GM13976 (cell line): ENCODE measurements at regions of chr11 and their contacts with region 1.

Region 1: GRCh38 chr11:66659763-66660162 is 17.9 kb downstream of the RBM4B start:
- DNase-seq: no peak
- CTCF ChIP-seq: no peak

Region 2: DNA sequence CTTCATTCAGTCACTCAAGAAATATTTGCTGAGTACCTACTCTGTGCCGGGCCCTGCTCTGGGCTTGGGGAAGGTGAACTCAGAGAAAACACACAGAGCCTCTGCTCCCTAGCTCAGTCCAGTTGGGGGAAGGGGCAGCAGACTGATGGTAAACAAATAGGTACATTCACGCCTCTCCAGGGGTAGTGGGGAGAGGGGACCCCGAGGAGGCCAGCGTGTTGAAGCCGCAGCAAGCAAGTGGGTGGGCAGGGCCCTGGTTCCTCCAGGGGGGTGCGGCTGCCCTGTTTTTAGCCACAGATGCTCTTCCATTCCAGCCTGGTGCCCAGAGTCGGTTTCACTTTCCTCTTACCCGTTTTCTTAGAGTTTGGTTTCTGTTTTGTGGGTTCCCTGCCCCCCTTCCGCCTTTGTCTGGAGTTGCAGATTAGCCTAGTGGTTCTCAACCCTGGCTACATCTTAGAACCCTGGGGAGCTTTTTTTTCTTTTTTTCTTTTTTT is 731.8 kb before region 1 on chr11:
- in situ Hi-C with region 1: no loop called
- DNase-seq: peak; percentile 91
- CTCF ChIP-seq: no peak

Region 3: DNA sequence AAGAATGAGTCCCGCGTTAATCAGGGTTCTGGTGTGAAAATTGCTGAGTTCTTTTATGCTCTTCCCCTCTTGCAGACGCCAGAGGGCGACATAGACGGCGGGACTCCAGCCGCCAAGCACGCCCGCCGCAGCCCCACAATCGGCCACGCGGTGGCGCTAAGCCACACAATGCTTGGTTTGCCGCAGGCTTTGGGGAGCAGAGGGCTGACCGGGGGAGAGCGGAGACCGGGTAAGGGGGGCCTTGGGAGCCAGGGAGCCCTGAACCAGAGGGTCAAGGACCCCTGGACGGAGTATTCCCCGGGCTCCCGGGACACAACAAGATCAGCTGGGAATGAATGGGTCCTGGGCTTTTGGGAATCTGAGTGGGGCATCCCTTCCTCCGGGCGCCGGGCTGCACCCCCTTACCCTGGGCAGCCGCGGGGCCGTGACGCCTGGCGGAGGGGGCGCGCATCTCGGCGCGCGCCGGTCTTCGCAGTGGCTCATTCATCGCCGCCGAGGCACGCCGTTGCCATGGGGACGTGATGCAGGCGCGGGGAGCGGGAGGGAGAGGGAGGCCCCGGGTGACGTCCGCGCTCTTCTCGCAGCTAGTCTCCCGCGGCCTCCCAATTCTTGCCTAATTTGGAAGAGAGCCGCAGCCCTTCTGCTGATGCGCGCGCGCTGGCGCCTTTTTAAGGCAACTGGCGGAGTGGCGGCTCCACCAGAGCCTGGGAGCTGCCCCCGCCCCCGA is 251.1 kb before region 1 on chr11:
- in situ Hi-C with region 1: loop called (anchors 10 kb)
- DNase-seq: peak; percentile 94
- CTCF ChIP-seq: peak; percentile 100

Region 4: DNA sequence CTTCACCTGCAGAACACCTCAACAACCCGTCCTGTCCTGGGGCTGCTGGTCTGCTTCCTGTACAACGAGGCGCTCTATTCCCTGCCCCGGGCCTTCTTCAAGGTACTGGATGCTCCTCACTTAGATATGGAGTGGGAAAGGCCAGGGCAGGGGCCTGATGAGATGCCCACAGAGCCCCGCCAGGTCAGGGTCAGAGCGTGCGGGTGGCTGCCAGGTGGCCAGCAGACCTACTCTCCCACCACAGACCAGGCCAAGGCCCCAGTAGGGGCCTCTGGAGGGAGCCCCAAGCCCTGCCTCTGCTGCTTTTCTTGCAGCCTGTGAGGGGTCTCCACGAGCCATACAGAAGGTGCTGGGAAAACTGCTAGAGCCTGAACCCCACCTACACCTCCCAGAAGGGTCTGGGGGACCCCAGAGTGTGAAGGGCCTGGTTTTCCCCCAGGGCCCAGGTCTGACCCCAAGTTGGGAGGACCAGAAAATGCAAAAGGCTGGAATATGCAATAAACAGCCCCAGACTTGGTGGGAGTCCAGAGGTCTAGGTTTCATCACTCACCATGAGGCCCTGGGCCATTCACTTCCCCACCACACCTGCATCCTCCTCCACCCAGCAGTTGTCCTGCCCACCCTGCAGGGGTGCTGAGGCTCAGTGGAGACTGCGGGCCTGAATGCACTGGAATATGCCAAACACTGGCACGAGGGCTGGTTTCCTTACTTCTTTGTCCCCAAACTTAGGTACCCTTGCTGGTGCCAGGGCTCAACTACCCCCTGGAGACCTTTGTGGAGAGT is 128.6 kb before region 1 on chr11:
- in situ Hi-C with region 1: no loop called
- DNase-seq: no peak
- CTCF ChIP-seq: no peak

Region 5: DNA sequence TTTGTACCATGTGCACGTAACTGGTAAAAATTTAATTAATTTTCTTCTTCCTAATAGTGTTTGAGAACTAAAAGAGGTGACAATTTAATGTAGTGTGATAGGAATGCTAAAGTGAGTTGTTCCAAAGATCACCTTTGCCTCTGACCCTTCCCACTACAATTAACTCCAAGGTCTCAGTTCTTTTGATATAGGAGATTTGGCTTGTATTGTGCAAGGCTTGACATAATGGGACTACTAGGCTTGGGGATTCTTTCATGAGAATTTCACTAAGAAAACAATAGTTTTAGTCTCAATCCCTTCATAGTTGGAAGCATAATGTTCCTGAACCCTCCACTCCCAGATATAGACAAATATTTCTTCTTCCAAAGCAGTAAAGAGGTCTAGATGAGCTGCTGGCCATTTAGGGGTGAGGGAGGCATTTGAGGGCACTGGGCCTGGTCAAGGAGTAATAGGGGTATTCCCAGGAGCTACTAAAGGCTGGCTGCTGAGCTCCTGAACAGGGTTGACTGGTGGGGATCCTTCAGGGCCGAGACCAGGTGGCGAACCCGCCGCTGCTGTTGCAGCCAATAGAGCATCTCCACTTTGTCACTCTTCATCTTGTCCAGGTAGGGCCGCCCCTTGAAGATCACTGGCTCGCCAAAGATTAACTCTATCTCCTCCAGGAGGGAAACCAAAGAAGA is 69.6 kb before region 1 on chr11:
- in situ Hi-C with region 1: no loop called
- DNase-seq: no peak
- CTCF ChIP-seq: no peak